ENCODE measurements at regions of chr2 and their contacts with region 1.

Region 1: GRCh38 chr2:230160112-230160660 is 59.6 kb downstream of the SP110 start:
- DNase-seq: peak; percentile 72
- ATAC-seq: peak; percentile 78
- H3K4me3 ChIP-seq: no peak overlapping the region
- H3K27ac ChIP-seq: no peak overlapping the region
- H3K4me1 ChIP-seq: no peaks in the 10 kb centered on the region
- H3K27me3 ChIP-seq: no peaks in the 10 kb centered on the region
- CTCF ChIP-seq: peak; percentile 85

Region 2: DNA sequence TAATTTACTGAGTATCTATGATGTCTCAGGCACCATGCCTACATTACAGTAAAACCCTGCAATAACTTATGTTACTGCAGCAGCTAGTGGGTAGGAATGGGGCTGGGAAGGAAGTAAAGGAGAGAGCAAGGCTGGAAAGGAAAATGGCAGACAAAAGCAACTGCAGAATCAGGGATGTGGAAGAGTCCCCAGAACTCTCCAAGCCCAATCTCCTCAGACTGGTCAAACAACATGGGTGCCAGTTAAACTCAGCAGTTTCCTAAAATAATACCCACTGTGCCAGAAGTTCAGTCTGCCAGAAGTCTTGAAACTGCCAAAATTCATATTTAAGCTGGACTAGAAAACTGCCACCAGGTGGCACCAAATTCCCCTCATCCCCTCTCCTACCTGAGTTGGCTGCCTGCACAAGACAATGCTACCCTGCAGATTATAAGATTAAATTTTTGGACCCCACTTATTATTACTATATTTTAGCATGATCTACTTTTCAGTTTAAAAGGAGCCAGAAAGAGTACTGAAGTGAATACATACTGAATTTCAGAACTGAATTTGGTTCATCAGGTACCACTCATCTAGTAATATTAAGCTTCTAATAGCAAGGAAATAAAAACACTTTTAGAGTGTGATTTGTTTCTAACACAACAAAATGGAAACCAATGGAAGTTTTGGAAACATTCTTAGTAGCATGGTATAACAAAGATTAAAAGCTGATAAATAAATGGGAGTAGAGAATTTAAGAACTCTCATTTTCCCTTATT is 359.0 kb before region 1 on chr2:
- CTCF ChIA-PET with region 1: no interaction called
- POLR2A ChIA-PET with region 1: no interaction called
- intact Hi-C with region 1: loop called (anchors 10 kb)
- DNase-seq: peak; percentile 74
- ATAC-seq: peak; percentile 76
- H3K4me3 ChIP-seq: no peak overlapping the region
- H3K27ac ChIP-seq: no peak overlapping the region
- H3K4me1 ChIP-seq: 0 out of 2 replicates have a peak, but pooled peaks cover 1% of the 10 kb centered on the region
- H3K27me3 ChIP-seq: no peaks in the 10 kb centered on the region
- CTCF ChIP-seq: peak; percentile 86

Region 3: GRCh38 chr2:229910832-229911412 is 249.3 kb before region 1 on chr2:
- CTCF ChIA-PET with region 1: no interaction called
- POLR2A ChIA-PET with region 1: no interaction called
- intact Hi-C with region 1: no loop called
- DNase-seq: peak; percentile 20
- ATAC-seq: peak; percentile 77
- H3K4me3 ChIP-seq: no peak overlapping the region
- H3K27ac ChIP-seq: no peak overlapping the region
- H3K4me1 ChIP-seq: no peaks in the 10 kb centered on the region
- H3K27me3 ChIP-seq: no peaks in the 10 kb centered on the region
- CTCF ChIP-seq: peak; percentile 59

Region 4: GRCh38 chr2:230007931-230008707 is 152.1 kb before region 1 on chr2:
- CTCF ChIA-PET with region 1: interaction called, 14 read pairs
- POLR2A ChIA-PET with region 1: no interaction called
- intact Hi-C with region 1: loop called (anchors 1 kb)
- DNase-seq: peak; percentile 84
- ATAC-seq: peak; percentile 66
- H3K4me3 ChIP-seq: peak overlapping the region; percentile 18; the same call in 1 of the 2 replicates
- H3K27ac ChIP-seq: no peak overlapping the region
- H3K4me1 ChIP-seq: peaks cover 4% of the 10 kb centered on the region; the same call in 1 of the 2 replicates
- H3K27me3 ChIP-seq: no peaks in the 10 kb centered on the region
- CTCF ChIP-seq: peak; percentile 87

Region 5: DNA sequence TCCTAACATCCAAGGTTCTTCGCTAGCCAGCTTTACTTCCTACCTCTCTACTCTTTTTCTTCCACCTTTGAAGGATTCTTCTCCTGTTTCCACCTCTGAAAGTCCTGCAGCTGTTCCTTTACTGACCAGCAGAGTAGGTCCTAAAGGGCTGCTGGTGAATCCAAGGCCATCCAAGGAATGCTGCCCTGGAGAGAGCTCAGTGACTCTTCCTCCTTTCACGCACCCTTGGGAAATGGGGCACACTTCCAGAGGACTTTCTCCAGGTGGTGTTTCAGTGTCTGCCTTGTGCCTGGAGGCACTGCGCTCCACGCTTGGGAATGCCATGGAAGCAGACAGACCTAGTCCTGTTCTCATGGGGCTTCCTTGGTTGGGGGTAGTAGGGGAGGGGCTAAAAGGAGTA is 136.9 kb before region 1 on chr2:
- CTCF ChIA-PET with region 1: interaction called, 13 read pairs
- POLR2A ChIA-PET with region 1: no interaction called
- intact Hi-C with region 1: no loop called
- DNase-seq: no peak
- ATAC-seq: no peak
- H3K4me3 ChIP-seq: no peak overlapping the region
- H3K27ac ChIP-seq: no peak overlapping the region
- H3K4me1 ChIP-seq: no peaks in the 10 kb centered on the region
- H3K27me3 ChIP-seq: no peaks in the 10 kb centered on the region
- CTCF ChIP-seq: no peak

Region 6: DNA sequence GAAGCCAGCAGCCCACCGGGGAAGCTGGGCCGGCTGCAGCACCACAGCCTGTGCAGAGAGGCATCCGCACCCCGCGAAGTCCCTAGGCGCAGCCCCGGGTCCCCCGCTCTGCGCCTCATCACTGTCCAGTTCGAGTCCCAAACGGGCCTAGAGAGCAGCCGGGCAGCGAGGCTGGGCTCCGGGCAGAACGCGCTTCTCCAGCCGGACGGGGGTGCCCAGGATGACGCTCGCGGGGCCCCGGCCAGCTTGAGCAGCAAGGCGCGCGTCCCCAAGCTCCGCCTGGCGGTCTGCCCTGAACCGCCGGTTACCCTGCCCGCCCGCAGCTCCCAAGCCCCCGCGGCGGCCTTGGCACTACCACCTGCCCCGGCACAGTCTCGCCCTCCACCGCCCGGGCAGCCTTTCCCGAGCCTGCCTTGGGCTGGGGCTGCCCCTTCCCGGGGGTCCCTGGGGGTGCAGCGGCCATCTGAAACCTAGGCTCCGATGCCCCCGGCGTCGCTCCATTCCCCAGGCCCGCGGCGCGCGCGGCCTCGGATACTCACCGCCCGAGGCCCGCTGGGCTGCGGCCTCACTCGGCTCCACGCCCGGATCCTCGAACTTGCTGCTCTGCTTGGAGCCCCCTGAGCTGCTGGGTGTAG is 92.1 kb before region 1 on chr2:
- CTCF ChIA-PET with region 1: interaction called, 28 read pairs
- POLR2A ChIA-PET with region 1: no interaction called
- intact Hi-C with region 1: loop called (anchors 1 kb)
- DNase-seq: peak; percentile 52
- ATAC-seq: peak; percentile 47
- H3K4me3 ChIP-seq: peak overlapping the region; percentile 73
- H3K27ac ChIP-seq: peak overlapping the region; percentile 59
- H3K4me1 ChIP-seq: no peaks in the 10 kb centered on the region
- H3K27me3 ChIP-seq: no peaks in the 10 kb centered on the region
- CTCF ChIP-seq: 0 out of 2 replicates have a peak, but pooled peaks have one; percentile 19

Measured in PC-3 (cell line).